Head of caudate nucleus (tissue), 42 donors: ENCODE measurements at regions of chr9 and their contacts with region 1.

Region 1: GRCh38 chr9:126375386-126375785 is 48.8 kb downstream of the MVB12B start:
- DNase-seq: peak in 19 of 42 donors; percentile 49 to 77 (median 65)

Region 2: GRCh38 chr9:126295936-126296600 is 79.3 kb before region 1 on chr9:
- intact Hi-C with region 1: no loop called
- DNase-seq: peak in 5 of 42 donors; percentile 4 to 41 (median 27)

Region 3: DNA sequence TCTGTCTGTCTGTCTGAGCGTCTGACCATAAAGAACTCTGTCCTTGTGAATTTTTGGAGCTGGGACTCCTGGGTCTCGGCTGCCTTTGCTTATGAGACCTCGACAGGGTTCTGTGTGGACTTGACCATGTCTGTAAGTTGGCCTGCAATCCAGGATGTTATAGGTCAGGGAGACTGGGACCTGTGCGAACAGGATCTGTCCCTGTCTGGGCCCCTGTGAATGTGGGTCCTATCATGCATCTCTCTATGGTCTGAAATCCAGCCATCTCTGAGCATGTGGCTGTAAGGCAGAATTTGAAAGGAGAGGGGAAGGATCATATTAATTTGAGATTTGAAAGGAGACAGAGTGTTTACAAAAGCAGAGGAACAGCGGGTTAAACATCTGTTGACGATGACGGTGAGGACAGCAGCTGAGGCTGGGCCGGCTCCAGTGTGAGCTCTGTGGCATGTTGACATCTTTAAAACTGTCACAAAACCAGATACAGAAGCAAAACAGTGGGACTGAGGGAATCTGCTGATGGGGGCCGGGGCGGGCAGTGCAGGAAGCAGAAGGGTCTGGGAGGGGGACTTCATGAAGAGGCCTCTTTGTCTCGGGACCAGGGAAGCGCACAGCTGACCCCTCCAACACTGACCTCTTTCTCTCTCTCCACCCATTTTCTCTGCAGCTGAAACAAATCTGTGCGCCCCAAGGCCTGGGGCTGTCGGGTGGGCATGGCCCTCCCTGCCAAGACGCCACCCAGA is 67.9 kb before region 1 on chr9:
- intact Hi-C with region 1: loop called (anchors 5 kb)
- DNase-seq: peak; percentile 72 to 95 (median 88)

Region 4: DNA sequence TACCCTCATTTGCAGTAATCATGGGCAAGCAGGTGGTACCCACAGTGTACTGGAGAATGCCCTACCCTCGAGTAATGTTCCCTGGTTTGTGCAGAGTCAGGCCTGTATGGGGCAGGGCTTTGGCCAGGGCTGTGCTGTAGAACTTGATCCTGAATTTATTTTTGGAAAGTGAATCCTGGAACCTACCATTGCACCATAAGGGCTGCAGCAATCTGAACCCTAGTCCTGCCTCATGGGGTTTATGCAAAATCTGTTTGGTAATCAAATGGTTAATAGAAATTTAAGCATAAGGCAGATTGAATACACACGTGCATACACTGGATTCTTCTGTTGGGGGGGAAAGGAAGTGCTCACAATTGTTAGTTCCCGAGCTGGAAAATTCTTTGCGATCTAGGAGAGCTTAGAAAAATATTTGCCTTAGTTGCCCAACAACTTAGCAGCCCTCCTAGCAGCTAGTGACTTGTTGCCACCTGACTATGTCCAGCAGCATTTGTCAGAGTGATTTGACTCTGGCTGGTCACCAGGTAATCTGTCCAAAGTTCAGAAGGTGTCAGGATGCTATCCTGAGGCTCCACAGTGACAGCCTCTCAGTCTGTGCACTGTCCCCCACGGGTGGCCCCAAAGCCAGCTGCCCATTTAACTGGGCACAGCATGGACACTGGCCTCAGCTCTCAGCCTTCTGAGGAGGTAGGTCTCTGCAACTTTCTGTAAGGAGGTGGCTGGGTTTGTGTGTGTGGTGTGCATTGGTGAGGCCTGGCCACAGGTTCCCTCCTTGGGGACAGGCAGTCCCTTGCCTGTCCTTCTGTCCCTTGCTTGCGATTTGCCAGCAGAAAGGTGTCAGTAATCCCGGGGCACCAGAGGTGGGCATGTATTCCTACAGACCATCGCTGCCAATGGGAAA is 40.4 kb before region 1 on chr9:
- intact Hi-C with region 1: loop called (anchors 5 kb)
- DNase-seq: no peak